Breast epithelium (tissue), 4 donors: ENCODE measurements at regions of chr16 and their contacts with region 1.

Region 1: GRCh38 chr16:6297666-6298435 is 1034.8 kb upstream of the RBFOX1 start:
- DNase-seq: no peak
- H3K4me3 ChIP-seq: no peak overlapping the region
- H3K27ac ChIP-seq: no peak overlapping the region
- H3K4me1 ChIP-seq: no peaks in the 10 kb centered on the region
- H3K27me3 ChIP-seq: no peaks in the 10 kb centered on the region
- CTCF ChIP-seq: no peak
- POLR2A ChIP-seq: no peak

Region 2: DNA sequence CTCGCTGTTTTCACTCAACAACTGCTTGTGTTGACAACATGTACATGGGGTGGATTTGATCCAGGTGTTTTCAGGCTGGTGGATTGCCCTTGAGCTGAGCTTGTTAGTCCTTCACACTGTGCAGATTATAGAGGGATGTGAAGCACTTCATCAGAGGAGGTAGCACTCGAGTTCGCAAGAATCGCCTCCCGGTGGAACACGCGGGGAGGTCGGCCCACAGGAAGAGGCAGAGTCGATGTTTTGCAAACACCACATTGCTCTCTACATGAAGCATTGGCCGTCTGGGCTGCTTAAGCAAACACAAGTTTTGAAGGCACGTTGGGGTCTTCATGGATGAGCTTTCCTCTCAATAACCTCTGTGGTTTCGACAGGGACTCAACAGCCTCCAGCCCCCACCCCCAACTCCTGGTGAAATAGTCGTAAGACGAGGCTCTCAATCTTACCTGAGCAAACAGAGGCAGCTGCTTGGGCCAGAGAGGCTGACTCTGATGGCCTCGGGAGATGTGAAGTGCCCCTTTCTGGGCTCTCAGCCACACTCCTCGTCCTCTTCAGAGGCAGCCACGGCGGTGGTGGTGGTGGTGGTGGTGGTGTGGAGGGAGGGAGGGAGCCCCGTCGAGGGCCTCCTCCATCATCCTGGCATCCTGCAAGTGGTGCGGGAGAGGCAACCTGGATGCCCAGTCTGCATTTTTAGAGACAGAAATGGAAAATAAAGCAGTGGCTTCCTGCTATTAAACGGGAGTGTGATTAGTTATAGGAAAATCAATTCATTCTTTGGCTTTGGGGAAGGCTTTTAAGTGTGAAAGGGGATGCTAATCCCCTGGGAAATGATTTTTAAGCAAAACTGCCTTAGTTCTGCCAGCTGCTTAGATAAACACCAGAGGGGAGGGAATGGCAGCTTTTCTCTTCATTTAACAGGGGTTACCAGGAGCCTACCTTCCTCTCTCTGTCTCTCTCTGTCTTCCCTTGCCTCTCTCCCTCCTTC is 647.8 kb before region 1 on chr16:
- intact Hi-C with region 1: loop called (anchors 5 kb)
- DNase-seq: no peak
- H3K4me3 ChIP-seq: no peak overlapping the region
- H3K27ac ChIP-seq: no peak overlapping the region
- H3K4me1 ChIP-seq: no peaks in the 10 kb centered on the region
- H3K27me3 ChIP-seq: peaks cover 0 to 10% of the 10 kb centered on the region in 2 donors
- CTCF ChIP-seq: no peak
- POLR2A ChIP-seq: no peak

Region 3: GRCh38 chr16:5665834-5666233 is 632.0 kb before region 1 on chr16:
- intact Hi-C with region 1: loop called (anchors 5 kb)
- DNase-seq: no peak
- H3K4me3 ChIP-seq: no peak overlapping the region
- H3K27ac ChIP-seq: no peak overlapping the region
- H3K4me1 ChIP-seq: no peaks in the 10 kb centered on the region
- H3K27me3 ChIP-seq: no peaks in the 10 kb centered on the region
- CTCF ChIP-seq: no peak
- POLR2A ChIP-seq: no peak

Region 4: GRCh38 chr16:6335076-6335475 is 37.2 kb after region 1 on chr16:
- intact Hi-C with region 1: no loop called
- DNase-seq: no peak
- H3K4me3 ChIP-seq: no peak overlapping the region
- H3K27ac ChIP-seq: no peak overlapping the region
- H3K4me1 ChIP-seq: no peaks in the 10 kb centered on the region
- H3K27me3 ChIP-seq: no peaks in the 10 kb centered on the region
- CTCF ChIP-seq: no peak
- POLR2A ChIP-seq: no peak

Region 5: GRCh38 chr16:6356911-6357310 is 59.1 kb after region 1 on chr16:
- intact Hi-C with region 1: no loop called
- DNase-seq: no peak
- H3K4me3 ChIP-seq: no peak overlapping the region
- H3K27ac ChIP-seq: no peak overlapping the region
- H3K4me1 ChIP-seq: no peaks in the 10 kb centered on the region
- H3K27me3 ChIP-seq: no peaks in the 10 kb centered on the region
- CTCF ChIP-seq: no peak
- POLR2A ChIP-seq: no peak